Astrocyte of the cerebellum (primary cell): ENCODE measurements at regions of chr9 and their contacts with region 1.

Region 1: DNA sequence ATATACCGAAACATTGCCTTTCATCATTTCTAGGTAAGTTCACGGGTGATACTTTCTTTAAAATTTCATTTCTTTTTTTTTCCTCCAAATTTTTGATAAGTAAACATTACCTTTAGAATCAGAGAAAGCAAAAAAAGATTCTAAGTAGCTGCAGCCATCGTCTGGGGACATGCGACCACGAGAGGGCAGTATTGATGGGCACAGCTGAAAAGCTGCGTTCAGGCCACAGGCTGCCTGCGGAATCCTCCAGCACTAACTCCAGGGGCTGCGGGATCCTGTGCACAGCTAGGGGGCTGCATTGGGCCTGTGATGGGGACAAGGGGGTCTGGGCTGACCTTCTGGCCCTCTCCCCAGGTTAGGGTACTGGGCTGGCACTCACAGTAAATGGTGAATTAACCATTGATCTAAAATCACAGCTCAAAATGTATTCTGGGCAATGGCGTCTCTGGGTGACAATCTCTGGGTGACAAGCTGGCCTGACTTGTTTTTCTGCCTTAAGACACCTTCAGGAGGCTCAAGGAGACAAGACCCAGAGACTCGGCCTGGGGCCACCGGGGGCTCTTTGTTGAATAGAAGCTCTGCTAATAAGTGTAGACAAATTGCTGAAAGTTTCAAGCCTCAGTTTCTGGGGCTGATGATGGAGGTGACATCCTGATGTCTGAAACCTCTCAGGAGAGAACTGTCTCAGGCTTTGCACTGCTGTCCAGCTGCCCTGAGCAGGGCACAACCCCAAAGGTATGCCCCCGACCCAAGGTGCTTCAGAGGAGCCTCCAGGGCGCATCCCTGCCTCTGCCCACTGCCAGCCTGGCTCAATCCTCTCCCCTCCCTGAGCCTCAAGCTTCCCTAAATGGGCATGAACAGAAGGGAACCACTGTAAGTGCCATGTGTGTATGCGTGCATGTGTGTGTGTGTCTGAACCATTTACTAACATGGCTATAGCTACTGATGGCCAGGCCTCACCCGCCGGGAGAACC is 44.3 kb upstream of the SARDH start:
- DNase-seq: peak; percentile 48
- H3K4me3 ChIP-seq: no peak overlapping the region
- CTCF ChIP-seq: peak; percentile 90

Region 2: GRCh38 chr9:133994353-133995011 is 212.0 kb after region 1 on chr9:
- in situ Hi-C with region 1: loop called (anchors 5 kb)
- DNase-seq: no peak
- H3K4me3 ChIP-seq: no peak overlapping the region
- CTCF ChIP-seq: peak; percentile 97